ENCODE measurements at regions of chr15 and their contacts with region 1.

Region 1: GRCh38 chr15:73633111-73633990 is at the start of gene NPTN:
- DNase-seq: peak; percentile 96
- ATAC-seq: peak; percentile 90
- H3K4me3 Mint-ChIP-seq: peak within 1 kb of the TSS; percentile 85
- H3K27ac Mint-ChIP-seq: peak within 1 kb of the TSS; percentile 57
- H3K4me1 Mint-ChIP-seq: peaks cover 53% of the 10 kb centered on the region
- H3K27me3 Mint-ChIP-seq: peaks cover under 1% of the 10 kb centered on the region
- CTCF ChIP-seq: no peak
- total RNA-seq, gene NPTN: 36.1 and 39.0 TPM in 2 replicates

Region 2: GRCh38 chr15:73240866-73241499 is 392.4 kb before region 1 on chr15:
- CTCF ChIA-PET with region 1: interaction called, 5 read pairs
- POLR2A ChIA-PET with region 1: no interaction called
- intact Hi-C with region 1: loop called (anchors 5 kb)
- DNase-seq: peak; percentile 23
- ATAC-seq: no peak
- H3K4me3 Mint-ChIP-seq: no peak overlapping the region
- H3K27ac Mint-ChIP-seq: no peak overlapping the region
- H3K4me1 Mint-ChIP-seq: no peaks in the 10 kb centered on the region
- H3K27me3 Mint-ChIP-seq: peaks cover 9% of the 10 kb centered on the region
- CTCF ChIP-seq: peak; percentile 98

Region 3: DNA sequence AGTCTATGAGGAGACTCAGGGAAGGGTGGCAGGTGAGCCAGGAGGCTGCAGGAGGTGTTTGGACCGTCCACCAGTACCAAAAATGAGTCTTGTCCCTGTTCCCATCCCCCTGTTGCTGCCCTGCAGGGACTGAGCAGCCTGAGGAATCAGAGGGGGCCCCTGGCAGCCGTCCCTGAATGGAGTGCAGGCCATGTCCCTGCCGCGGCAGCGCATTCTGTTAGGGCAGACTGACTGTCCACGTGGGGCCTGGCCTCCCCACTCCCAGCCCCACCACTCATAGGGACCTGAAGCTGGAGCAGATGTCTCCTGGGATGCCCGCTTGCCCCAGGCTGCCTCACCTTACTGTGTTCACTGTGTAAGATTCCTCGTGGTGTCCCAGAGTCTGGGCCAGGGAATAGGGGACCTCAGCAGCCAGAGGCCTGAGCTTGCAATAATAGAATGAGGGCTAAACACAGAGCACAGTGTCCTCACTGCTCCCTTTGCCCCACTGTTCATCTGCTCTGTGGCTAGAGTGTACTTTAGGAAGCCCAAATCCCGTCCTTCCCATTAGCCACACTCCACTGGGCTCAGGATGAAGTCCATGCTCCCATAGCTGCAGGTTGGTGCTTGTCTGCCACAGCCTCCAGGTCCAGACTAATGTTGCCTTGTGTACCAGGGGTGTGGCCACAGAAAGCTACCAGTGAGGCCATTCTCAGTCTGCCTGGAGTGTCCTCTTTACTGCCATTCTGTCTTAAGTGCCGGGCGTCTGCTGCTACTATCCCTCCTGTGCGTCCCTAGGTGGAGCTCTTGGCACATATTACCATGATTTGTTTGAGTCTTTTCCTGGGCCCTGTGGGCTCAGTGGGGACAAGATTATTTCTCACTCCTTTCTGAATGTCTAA is 327.8 kb before region 1 on chr15:
- CTCF ChIA-PET with region 1: interaction called, 6 read pairs
- POLR2A ChIA-PET with region 1: no interaction called
- intact Hi-C with region 1: loop called (anchors 1 kb)
- DNase-seq: no peak
- ATAC-seq: peak; percentile 62
- H3K4me3 Mint-ChIP-seq: no peak overlapping the region
- H3K27ac Mint-ChIP-seq: no peak overlapping the region
- H3K4me1 Mint-ChIP-seq: peaks cover 10% of the 10 kb centered on the region
- H3K27me3 Mint-ChIP-seq: peaks cover 2% of the 10 kb centered on the region
- CTCF ChIP-seq: no peak

Region 4: DNA sequence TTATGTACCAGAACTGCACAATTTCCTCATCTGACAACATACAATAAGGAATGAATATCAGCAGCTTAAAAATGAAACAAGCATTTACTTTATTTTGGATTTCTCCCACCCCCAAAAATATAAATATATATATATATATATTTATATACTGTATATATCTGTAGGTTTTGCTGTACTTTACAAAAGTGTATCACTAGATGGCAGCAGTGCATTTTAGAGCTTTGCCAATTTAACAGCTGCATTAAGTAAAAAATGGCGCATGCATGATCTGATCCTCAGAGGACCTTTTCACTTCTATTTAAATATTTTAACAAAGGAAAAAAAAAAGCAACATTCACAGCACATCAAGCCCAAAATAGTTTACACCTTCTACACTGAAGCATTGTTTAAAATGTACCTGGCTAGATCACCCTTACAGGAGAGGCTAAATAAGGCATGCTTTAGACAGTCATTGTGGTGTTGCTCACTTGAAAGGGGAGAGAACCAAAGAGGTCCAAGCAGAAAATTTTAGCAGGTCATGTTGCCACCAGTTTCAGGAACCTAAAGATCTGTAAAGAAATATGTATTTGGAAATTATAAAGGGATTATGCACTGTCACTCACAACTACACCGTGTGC is 72.7 kb before region 1 on chr15:
- CTCF ChIA-PET with region 1: interaction called, 50 read pairs
- POLR2A ChIA-PET with region 1: interaction called, 4 read pairs
- intact Hi-C with region 1: loop called (anchors 1 kb)
- DNase-seq: no peak
- ATAC-seq: peak; percentile 40
- H3K4me3 Mint-ChIP-seq: no peak overlapping the region
- H3K27ac Mint-ChIP-seq: no peak overlapping the region
- H3K4me1 Mint-ChIP-seq: no peaks in the 10 kb centered on the region
- H3K27me3 Mint-ChIP-seq: no peaks in the 10 kb centered on the region
- CTCF ChIP-seq: no peak

Region 5: GRCh38 chr15:73700041-73700842 is 66.9 kb after region 1 on chr15:
- CTCF ChIA-PET with region 1: interaction called, 6 read pairs
- POLR2A ChIA-PET with region 1: interaction called, 3 read pairs
- intact Hi-C with region 1: loop called (anchors 1 kb)
- DNase-seq: peak; percentile 38
- ATAC-seq: peak; percentile 55
- H3K4me3 Mint-ChIP-seq: no peak overlapping the region
- H3K27ac Mint-ChIP-seq: no peak overlapping the region
- H3K4me1 Mint-ChIP-seq: peaks cover 11% of the 10 kb centered on the region
- H3K27me3 Mint-ChIP-seq: peaks cover 28% of the 10 kb centered on the region
- CTCF ChIP-seq: no peak

Region 6: DNA sequence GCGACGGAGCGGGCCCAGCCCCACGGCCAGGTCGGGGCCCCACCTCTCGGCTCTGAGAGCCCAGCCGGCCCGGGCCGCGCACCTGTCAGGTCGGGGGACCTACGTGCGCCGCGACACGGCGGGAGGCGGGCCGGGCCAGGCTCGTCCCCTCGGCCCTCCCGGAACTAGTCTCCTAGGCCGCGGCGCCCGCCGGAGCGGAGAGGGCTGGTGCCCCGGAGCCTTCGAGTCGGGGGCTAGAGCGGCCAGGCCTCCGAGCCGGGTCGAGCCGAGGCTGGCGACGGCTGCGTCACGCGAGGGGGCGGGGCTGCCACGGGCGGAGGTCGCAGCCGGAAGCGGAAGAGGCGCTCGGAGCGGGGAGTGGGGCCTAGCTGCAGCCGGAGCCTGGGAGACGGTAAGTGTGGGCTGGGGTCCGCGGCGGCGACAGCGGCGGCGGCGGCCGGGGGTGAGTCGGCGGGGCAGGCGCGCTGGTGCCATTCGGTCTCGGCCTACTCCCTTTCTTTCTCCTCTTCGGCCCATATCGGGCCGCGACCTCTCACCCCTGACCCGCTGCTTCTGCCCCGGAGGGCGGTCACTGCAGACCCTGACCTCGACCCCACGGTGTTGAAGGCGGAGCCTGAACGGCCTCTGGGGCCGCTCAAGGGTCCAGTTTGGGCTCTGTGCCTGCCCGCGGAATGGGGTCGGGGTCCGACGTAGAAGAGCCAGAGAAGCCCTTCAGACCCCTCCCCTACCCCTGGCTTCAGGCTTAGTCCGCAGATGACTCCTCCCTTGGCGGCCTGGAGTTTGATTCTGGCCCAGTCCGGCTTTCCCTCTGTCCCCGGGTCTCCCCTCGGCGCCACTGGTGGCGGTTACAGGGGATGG is 982.4 kb after region 1 on chr15 and contains the start of gene CLK3:
- CTCF ChIA-PET with region 1: no interaction called
- POLR2A ChIA-PET with region 1: no interaction called
- intact Hi-C with region 1: loop called (anchors 10 kb)
- DNase-seq: peak; percentile 99
- ATAC-seq: peak; percentile 83
- H3K4me3 Mint-ChIP-seq: peak within 1 kb of the TSS; percentile 89
- H3K27ac Mint-ChIP-seq: peak within 1 kb of the TSS; percentile 95
- H3K4me1 Mint-ChIP-seq: peaks cover 35% of the 10 kb centered on the region
- H3K27me3 Mint-ChIP-seq: no peaks in the 10 kb centered on the region
- CTCF ChIP-seq: no peak
- total RNA-seq, gene CLK3: 100 and 116 TPM in 2 replicates